ENCODE measurements at regions of chr3 and their contacts with region 1.

Region 1: DNA sequence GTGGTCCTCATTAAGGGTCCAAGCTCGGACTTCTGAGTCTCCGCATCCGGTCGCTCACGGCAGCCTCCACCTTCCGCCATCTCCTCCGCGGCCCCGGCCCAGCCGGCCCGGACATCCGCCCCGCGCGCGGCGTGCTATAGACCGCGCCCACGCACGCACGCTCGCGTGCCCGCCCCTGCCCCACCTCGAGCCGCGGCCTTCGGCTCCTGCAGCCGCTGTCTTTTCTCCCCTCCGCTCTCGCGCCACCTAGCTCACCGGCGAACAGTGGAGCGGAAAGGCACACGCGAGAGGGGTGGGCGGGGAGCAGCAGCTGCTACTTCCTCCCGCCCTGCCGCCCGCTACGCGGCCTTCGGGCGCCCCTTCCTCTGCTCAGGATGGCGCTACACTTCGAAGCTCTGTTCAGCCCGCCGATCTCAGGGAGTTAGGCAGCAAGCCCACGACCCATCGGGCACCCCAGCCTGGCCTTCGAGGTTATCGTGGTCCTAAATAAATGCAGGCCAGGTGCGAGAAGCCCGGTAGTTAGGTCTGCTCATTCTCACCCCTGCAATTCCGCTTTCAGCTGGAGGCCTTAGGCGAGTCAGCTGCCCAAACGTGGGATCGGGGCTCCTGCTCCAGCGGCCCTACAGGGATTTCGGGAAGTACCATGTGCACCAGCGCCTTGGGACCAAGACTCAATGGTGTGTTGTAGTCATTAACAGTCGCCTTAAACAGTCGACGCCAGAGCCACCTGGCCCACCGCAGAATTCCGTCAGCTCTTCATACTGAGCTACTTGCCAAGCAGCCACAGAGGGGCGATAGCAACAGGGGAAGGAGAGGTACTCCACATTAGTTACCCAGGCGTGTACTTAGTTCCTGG is at the start of gene USP4:
- DNase-seq: peak; percentile 93
- ATAC-seq: peak; percentile 98
- total RNA-seq, gene USP4: 37.1 to 45.5 TPM

Region 2: DNA sequence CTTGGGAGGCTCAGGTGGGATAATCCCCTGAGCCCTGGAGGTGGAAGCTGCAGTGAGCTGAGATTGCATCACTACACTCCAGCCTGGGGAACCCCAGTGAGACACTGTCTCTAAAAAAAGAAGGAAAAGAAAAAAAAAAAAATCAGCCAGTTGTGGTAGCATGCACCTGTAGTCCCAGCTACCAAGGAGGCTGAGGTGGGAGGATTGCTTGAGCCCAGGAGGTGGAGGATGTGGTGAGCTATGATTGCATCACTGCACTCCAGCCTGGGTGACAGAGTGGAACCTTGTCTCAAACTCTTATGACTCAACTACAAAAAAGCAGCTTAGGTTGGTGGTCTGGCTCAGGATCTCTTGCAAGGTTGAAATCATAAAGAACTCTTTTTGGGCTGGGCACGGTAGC is 37.3 kb after region 1 on chr3:
- intact Hi-C with region 1: no loop called
- DNase-seq: no peak
- ATAC-seq: peak in 1 of 2 donors; percentile 30

Region 3: DNA sequence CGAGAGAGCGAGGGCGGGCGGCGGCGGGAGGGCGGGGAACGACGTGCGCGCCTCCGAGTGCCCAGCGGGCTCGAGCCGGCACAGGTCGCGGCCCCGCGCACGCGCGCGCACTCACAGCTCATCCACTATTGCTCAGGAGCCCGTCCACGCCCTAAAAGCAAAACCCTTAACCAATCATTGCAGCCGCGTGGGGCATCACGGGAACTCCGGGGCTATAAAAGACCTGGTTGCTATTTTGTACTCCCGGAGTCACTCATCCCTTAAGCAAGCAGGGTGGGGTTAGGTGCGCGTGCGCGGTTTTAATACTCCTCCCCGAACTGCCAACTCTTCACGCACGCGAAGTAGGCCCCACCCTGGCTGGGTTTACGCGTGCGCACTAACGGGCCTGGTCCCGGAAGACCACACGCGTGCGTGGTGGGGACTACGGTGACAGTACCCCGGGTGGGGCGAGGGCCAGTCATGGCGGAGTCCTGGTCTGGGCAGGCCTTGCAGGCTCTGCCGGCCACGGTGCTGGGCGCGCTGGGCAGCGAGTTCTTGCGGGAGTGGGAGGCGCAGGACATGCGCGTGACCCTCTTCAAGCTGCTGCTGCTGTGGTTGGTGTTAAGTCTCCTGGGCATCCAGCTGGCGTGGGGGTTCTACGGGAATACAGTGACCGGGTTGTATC is 71.9 kb after region 1 on chr3 and contains the starts of genes RHOA and TCTA:
- intact Hi-C with region 1: loop called in 1 of 2 experiments (anchors 5 kb)
- DNase-seq: peak; percentile 99
- ATAC-seq: peak; percentile 95
- total RNA-seq, gene RHOA: 311 to 334 TPM
- total RNA-seq, gene TCTA: 15.2 to 19.1 TPM

Region 4: DNA sequence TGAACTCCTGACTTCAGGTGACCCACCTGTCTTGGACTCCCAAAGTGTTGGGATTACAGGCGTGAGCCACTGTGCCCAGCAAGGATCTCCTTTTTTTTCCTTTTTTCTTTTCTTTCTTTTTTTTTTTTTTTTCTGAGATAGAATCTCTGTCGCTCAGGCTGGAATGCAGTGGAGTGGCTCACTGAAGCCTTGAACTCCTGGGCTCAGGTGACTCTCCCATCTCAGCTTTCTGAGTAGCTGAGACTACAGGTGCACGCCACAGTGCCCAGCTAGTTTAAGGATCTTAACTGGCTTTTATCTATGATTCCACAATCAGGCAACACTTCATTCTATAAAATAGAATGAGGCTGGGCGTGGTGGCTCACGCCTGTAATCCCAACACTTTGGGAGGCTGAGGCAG is 105.2 kb after region 1 on chr3:
- intact Hi-C with region 1: loop called in 1 of 2 experiments (anchors 5 kb)
- DNase-seq: no peak
- ATAC-seq: no peak